IMR-90 (cell line): ENCODE measurements at regions of chr2 and their contacts with region 1.

Region 1: GRCh38 chr2:240840435-240841080 is 20.5 kb upstream of the KIF1A start:
- DNase-seq: peak; percentile 70
- ATAC-seq: peak; percentile 86
- H3K4me3 ChIP-seq: no peak overlapping the region
- H3K27ac ChIP-seq: no peak overlapping the region
- H3K4me1 ChIP-seq: peaks cover 6% of the 10 kb centered on the region; the same call in 1 of the 2 replicates
- H3K27me3 ChIP-seq: peaks cover 34% of the 10 kb centered on the region
- CTCF ChIP-seq: peak; percentile 84
- POLR2A ChIP-seq: no peak
- RAD21 ChIP-seq: peak; percentile 79

Region 2: GRCh38 chr2:240499309-240500301 is 341.0 kb before region 1 on chr2:
- CTCF ChIA-PET with region 1: no interaction called
- POLR2A ChIA-PET with region 1: no interaction called
- dilution Hi-C with region 1: no loop called
- in situ Hi-C with region 1: loop called (anchors 10 kb)
- intact Hi-C with region 1: no loop called
- DNase-seq: no peak
- ATAC-seq: no peak
- H3K4me3 ChIP-seq: no peak overlapping the region
- H3K27ac ChIP-seq: no peak overlapping the region
- H3K4me1 ChIP-seq: no peaks in the 10 kb centered on the region
- H3K27me3 ChIP-seq: no peaks in the 10 kb centered on the region
- CTCF ChIP-seq: no peak
- POLR2A ChIP-seq: no peak
- RAD21 ChIP-seq: no peak

Region 3: DNA sequence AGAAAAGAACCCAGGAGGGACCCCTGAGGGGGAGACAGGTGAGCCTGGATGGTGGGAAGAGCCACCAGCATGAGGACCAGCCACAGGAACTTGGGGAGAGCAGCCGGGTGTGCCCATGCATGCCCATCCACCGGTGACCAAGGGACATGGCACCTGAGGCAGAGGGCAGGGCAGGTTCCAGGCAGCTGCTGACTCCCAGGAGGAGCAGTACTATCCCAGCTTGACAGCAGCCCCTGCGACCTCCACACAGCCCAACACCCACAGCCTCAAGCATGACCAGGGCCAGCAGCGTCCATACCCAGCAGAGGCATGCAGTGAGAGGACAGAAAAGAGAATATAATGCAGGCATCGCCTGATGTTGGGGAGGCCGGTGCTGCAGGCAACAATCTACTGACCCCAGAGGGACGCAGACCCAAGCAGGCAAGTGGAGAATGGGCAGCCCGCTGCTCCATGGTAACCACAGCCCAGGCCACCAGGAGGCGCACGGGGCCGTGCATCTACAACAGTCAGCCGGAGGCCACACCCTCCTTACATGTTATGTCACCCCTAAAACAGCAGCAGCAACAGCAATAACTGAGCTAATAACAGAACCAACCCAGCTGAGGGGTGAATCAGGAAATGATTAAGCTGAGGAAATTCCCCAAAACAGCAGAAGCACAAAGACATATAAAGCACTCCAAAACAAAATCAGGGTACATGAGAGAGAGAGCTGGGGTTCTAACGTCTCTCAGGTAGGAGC is 326.8 kb before region 1 on chr2:
- CTCF ChIA-PET with region 1: interaction called, 7 read pairs
- POLR2A ChIA-PET with region 1: no interaction called
- dilution Hi-C with region 1: no loop called
- in situ Hi-C with region 1: loop called (anchors 10 kb)
- intact Hi-C with region 1: loop called (anchors 1 kb)
- DNase-seq: peak; percentile 88
- ATAC-seq: peak; percentile 100
- H3K4me3 ChIP-seq: no peak overlapping the region
- H3K27ac ChIP-seq: no peak overlapping the region
- H3K4me1 ChIP-seq: peaks cover 1% of the 10 kb centered on the region; the same call in 1 of the 2 replicates
- H3K27me3 ChIP-seq: no peaks in the 10 kb centered on the region
- CTCF ChIP-seq: peak; percentile 95
- POLR2A ChIP-seq: 0 out of 2 replicates have a peak, but pooled peaks have one; percentile 32
- RAD21 ChIP-seq: peak; percentile 93

Region 4: GRCh38 chr2:240810207-240810606 is 30.4 kb before region 1 on chr2:
- CTCF ChIA-PET with region 1: interaction called, 8 read pairs
- POLR2A ChIA-PET with region 1: no interaction called
- dilution Hi-C with region 1: no loop called
- in situ Hi-C with region 1: no loop called
- intact Hi-C with region 1: loop called (anchors 1 kb)
- DNase-seq: no peak
- ATAC-seq: no peak
- H3K4me3 ChIP-seq: no peak overlapping the region
- H3K27ac ChIP-seq: no peak overlapping the region
- H3K4me1 ChIP-seq: no peaks in the 10 kb centered on the region
- H3K27me3 ChIP-seq: peaks cover 7% of the 10 kb centered on the region
- CTCF ChIP-seq: no peak
- POLR2A ChIP-seq: no peak
- RAD21 ChIP-seq: no peak